A549 (cell line): ENCODE measurements at regions of chr3 and their contacts with region 1.

Region 1: GRCh38 chr3:196609343-196609775 is 30.1 kb upstream of the NRROS start:
- DNase-seq: peak; percentile 79 to 80
- ATAC-seq: peak; percentile 100
- H3K4me3 ChIP-seq: no peak overlapping the region
- H3K27ac ChIP-seq: peak overlapping the region; percentile 31 to 36; a peak in 3 of 6 replicates
- H3K4me1 ChIP-seq: peaks cover 4% of the 10 kb centered on the region; the same call in 1 of the 3 replicates
- CTCF ChIP-seq: peak; percentile 80
- EP300 ChIP-seq: no peak
- POLR2A ChIP-seq: no peak
- RAD21 ChIP-seq: peak; percentile 93 to 95

Region 2: GRCh38 chr3:196590279-196590678 is 19.1 kb before region 1 on chr3:
- CTCF ChIA-PET with region 1: interaction called, 12 read pairs
- POLR2A ChIA-PET with region 1: no interaction called
- DNase-seq: no peak
- ATAC-seq: no peak
- H3K4me3 ChIP-seq: no peak overlapping the region
- H3K27ac ChIP-seq: no peak overlapping the region
- H3K4me1 ChIP-seq: peaks cover 7% of the 10 kb centered on the region; the same call in 2 of the 3 replicates
- CTCF ChIP-seq: no peak
- EP300 ChIP-seq: no peak
- POLR2A ChIP-seq: no peak
- RAD21 ChIP-seq: no peak

Region 3: GRCh38 chr3:196620161-196620604 is 10.8 kb after region 1 on chr3:
- CTCF ChIA-PET with region 1: interaction called, 18 read pairs
- POLR2A ChIA-PET with region 1: no interaction called
- DNase-seq: no peak
- ATAC-seq: no peak
- H3K4me3 ChIP-seq: no peak overlapping the region
- H3K27ac ChIP-seq: no peak overlapping the region
- H3K4me1 ChIP-seq: no peaks in the 10 kb centered on the region
- CTCF ChIP-seq: no peak
- EP300 ChIP-seq: no peak
- POLR2A ChIP-seq: no peak
- RAD21 ChIP-seq: no peak

Region 4: DNA sequence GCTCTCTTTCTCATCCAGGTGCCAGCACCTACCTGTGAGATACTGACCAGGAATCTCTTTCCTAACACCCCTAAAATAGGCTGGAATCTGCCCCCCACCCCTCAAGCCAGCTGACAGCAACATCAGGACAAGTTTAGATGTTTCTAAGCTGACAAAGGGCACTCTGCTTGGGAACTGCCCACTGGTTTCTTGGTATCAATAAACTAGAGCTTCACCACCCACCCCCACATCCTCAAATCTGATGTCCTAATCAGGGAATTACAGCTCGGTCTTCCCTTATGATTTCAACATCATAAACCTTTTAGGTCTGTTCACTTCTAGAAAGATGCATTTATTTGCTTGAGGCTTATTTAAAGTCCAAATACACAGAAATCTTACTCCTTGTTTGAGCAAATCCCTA is 68.0 kb after region 1 on chr3:
- CTCF ChIA-PET with region 1: interaction called, 11 read pairs
- POLR2A ChIA-PET with region 1: no interaction called
- DNase-seq: no peak
- ATAC-seq: no peak
- H3K4me3 ChIP-seq: no peak overlapping the region
- H3K27ac ChIP-seq: no peak overlapping the region
- H3K4me1 ChIP-seq: 0 out of 3 replicates have a peak, but pooled peaks cover 4% of the 10 kb centered on the region
- CTCF ChIP-seq: no peak
- EP300 ChIP-seq: no peak
- POLR2A ChIP-seq: no peak
- RAD21 ChIP-seq: no peak

Region 5: GRCh38 chr3:196684548-196685407 is 75.4 kb after region 1 on chr3:
- CTCF ChIA-PET with region 1: interaction called, 59 read pairs
- POLR2A ChIA-PET with region 1: interaction called, 6 read pairs
- DNase-seq: peak; percentile 34 to 39
- ATAC-seq: peak; percentile 59 to 84
- H3K4me3 ChIP-seq: no peak overlapping the region
- H3K27ac ChIP-seq: peak overlapping the region; percentile 36 to 66; a peak in 3 of 6 replicates
- H3K4me1 ChIP-seq: peaks cover 3% of the 10 kb centered on the region; the same call in 1 of the 3 replicates
- CTCF ChIP-seq: peak; percentile 75
- EP300 ChIP-seq: no peak
- POLR2A ChIP-seq: no peak
- RAD21 ChIP-seq: peak; percentile 79 to 83

Region 6: DNA sequence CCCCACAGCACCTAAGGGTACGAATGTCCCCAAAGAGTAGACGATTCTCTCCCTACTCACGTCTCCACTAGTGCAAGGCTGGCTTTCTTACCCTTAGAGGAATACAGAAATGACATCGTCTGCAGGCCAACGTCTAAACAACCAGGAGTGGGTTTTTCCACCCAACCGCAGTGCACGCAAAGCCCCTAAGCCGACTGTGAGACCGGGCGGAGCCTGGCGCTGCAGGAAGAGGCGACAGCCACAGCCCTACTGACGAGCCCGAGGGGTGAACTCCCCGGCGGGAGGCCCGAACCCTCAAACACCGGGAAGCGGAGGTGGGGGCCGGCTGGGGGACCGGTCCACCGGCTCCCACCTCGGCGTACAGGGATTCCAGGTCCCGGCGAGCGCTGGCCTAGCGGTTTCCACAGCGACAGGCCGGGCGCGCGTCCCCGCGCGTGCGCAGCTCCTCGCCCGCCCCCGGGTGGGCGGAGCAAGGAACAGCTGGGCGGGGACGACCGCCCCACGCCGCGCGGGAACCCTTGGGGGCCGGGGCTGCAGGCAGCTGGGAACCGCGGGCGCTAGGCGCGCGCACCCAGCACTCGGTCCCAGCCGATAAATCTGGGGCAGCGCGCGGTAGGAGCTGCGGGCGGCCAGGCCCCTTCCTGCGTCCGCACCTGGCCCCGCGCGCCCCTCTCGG is 102.6 kb after region 1 on chr3 and contains the starts of genes CEP19 and PIGX:
- CTCF ChIA-PET with region 1: interaction called, 14 read pairs
- POLR2A ChIA-PET with region 1: no interaction called
- DNase-seq: peak; percentile 74 to 81
- ATAC-seq: peak; percentile 89 to 93
- H3K4me3 ChIP-seq: peak within 1 kb of the TSS; percentile 93
- H3K27ac ChIP-seq: peak within 1 kb of the TSS; percentile 95 to 99
- H3K4me1 ChIP-seq: peaks cover 19% of the 10 kb centered on the region
- CTCF ChIP-seq: no peak
- EP300 ChIP-seq: no peak
- POLR2A ChIP-seq: peak; percentile 76
- RAD21 ChIP-seq: no peak
- polyA plus RNA-seq, gene CEP19: 4.2 and 5.3 TPM in 2 replicates
- polyA plus RNA-seq, gene PIGX: 36.2 and 45.2 TPM in 2 replicates